Heart left ventricle (tissue), 16 donors: ENCODE measurements at regions of chr11 and their contacts with region 1.

Region 1: GRCh38 chr11:30553521-30554118 is 32.5 kb downstream of the MPPED2 start:
- DNase-seq: no peak
- ATAC-seq: no peak
- H3K4me3 ChIP-seq: no peak overlapping the region
- H3K27ac ChIP-seq: no peak overlapping the region
- H3K4me1 ChIP-seq: peaks cover 0 to 9% (median 0%) of the 10 kb centered on the region in 12 donors
- H3K27me3 ChIP-seq: no peaks in the 10 kb centered on the region
- CTCF ChIP-seq: no peak
- POLR2A ChIP-seq: no peak

Region 2: GRCh38 chr11:30474151-30474954 is 79.3 kb before region 1 on chr11:
- intact Hi-C with region 1: no loop called
- DNase-seq: no peak
- ATAC-seq: peak in 2 of 4 donors; percentile 8 to 14
- H3K4me3 ChIP-seq: no peak overlapping the region
- H3K27ac ChIP-seq: no peak overlapping the region
- H3K4me1 ChIP-seq: peaks cover 0 to 36% (median 16%) of the 10 kb centered on the region in 12 donors
- H3K27me3 ChIP-seq: no peaks in the 10 kb centered on the region
- CTCF ChIP-seq: peak in 1 of 12 donors; percentile 9
- POLR2A ChIP-seq: no peak

Region 3: DNA sequence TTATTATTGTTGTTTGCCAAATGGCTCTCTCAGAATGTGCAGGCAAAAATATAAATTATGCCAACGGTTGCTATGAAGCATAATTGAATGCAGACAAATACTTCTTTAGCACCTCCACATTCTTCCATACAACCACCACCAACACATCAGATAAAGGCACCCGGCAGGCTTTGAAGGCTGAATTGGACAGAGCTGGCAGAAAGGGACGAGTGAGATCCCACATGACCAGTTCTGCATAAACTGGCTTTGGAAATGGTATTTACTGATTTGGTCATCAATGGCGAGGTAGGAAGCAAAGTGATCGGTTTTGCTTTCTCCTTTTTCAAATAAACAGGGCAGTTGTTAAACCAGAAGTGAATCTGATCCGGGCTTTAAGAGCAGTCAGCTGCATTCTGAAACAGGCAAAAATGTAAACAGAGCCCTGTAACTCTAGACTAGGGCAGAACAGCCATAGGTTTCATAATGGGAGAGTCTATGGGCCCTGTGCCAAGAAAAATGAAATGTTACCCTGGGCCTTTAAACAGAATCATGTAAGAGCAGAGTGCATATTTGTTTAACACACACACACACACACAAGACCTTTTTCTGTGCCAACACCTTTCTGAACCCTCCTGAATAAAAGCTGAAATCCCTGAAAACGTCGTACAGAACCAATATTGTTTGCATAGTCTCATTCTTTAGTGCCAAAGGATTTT is 65.2 kb before region 1 on chr11:
- intact Hi-C with region 1: loop called in 1 of 10 experiments (anchors 10 kb)
- DNase-seq: no peak
- ATAC-seq: peak in 2 of 4 donors; percentile 50 to 59
- H3K4me3 ChIP-seq: no peak overlapping the region
- H3K27ac ChIP-seq: peak overlapping the region in 2 of 12 donors; percentile 39 to 40
- H3K4me1 ChIP-seq: peaks cover 0 to 47% (median 23%) of the 10 kb centered on the region in 12 donors
- H3K27me3 ChIP-seq: no peaks in the 10 kb centered on the region
- CTCF ChIP-seq: no peak
- POLR2A ChIP-seq: no peak